H1 (cell line): ENCODE measurements at regions of chr2 and their contacts with region 1.

Region 1: DNA sequence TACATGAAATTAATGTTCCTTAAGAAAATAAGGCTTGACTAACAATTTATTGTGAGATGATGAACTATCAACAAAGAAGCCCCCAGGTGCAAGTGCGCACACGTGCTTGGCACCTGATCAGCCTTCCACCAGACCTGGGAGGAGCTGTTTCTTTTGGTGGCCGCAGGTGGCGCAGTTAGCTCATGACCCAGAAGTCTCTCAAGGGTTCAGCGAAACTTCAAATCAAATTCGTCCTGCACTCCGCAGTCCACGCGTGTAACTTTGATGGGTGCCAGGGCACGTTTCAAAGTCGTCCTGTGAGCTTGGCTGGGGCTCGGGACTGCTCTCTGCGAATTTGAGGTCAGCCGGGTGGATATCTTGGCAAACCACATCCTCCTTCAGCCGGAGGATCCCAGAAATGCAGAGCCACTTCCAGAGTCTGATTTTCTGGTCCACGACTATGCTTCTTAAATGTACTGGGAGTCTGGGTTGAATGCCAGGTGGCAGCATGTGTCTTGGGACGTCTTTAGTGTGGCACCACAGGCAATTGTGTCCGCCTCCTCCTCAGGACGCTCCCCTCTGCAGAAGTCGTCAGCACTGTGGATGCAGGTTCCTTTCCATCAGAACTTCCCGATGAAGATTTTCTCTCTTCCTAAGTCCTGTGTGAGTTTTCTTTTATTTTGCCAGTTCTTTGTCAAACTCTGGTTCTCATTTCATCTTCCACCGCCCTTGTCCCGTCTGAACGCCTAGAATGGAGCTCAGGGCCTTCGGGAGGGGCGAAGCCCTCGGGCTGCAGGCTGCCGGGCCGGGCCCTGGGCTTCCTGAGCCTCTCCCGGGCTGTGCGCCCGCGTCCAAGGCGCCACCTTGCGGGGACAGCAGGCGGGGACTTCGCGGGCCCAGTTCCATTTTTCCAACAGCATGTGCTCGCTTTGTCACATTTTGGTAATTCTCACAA is 61.3 kb upstream of the RAPGEF4 start:
- DNase-seq: peak; percentile 47 to 89
- H3K4me3 ChIP-seq: no peak overlapping the region
- H3K27ac ChIP-seq: no peak overlapping the region
- H3K4me1 ChIP-seq: peaks cover 0 to 4% (median 0%) of the 10 kb centered on the region in 4 experiments; a peak in 1 of 7 replicates
- H3K27me3 ChIP-seq: peaks cover 0 to 4% (median 2%) of the 10 kb centered on the region in 4 experiments; a peak in 2 of 7 replicates
- CTCF ChIP-seq: peak; percentile 78 to 95 (median 81)
- EP300 ChIP-seq: no peak
- POLR2A ChIP-seq: no peak
- RAD21 ChIP-seq: peak; percentile 80 to 85

Region 2: GRCh38 chr2:172606285-172606684 is 68.0 kb before region 1 on chr2:
- CTCF ChIA-PET with region 1: interaction called, 28 read pairs
- POLR2A ChIA-PET with region 1: no interaction called
- DNase-seq: no peak
- H3K4me3 ChIP-seq: no peak overlapping the region
- H3K27ac ChIP-seq: no peak overlapping the region
- H3K4me1 ChIP-seq: no peaks in the 10 kb centered on the region
- H3K27me3 ChIP-seq: no peaks in the 10 kb centered on the region
- CTCF ChIP-seq: no peak
- EP300 ChIP-seq: no peak
- POLR2A ChIP-seq: no peak
- RAD21 ChIP-seq: no peak

Region 3: GRCh38 chr2:172655091-172655837 is 19.0 kb before region 1 on chr2:
- CTCF ChIA-PET with region 1: interaction called, 28 read pairs
- POLR2A ChIA-PET with region 1: no interaction called
- DNase-seq: no peak
- H3K4me3 ChIP-seq: no peak overlapping the region
- H3K27ac ChIP-seq: no peak overlapping the region
- H3K4me1 ChIP-seq: no peaks in the 10 kb centered on the region
- H3K27me3 ChIP-seq: no peaks in the 10 kb centered on the region
- CTCF ChIP-seq: no peak
- EP300 ChIP-seq: no peak
- POLR2A ChIP-seq: no peak
- RAD21 ChIP-seq: no peak

Region 4: GRCh38 chr2:172685467-172685866 is 11.2 kb after region 1 on chr2:
- CTCF ChIA-PET with region 1: interaction called, 41 read pairs
- POLR2A ChIA-PET with region 1: no interaction called
- DNase-seq: no peak
- H3K4me3 ChIP-seq: no peak overlapping the region
- H3K27ac ChIP-seq: no peak overlapping the region
- H3K4me1 ChIP-seq: peaks cover 0 to 3% (median 0%) of the 10 kb centered on the region in 4 experiments; a peak in 1 of 7 replicates
- H3K27me3 ChIP-seq: no peaks in the 10 kb centered on the region
- CTCF ChIP-seq: no peak
- EP300 ChIP-seq: no peak
- POLR2A ChIP-seq: no peak
- RAD21 ChIP-seq: no peak

Region 5: GRCh38 chr2:172698041-172698863 is 24.0 kb after region 1 on chr2:
- CTCF ChIA-PET with region 1: interaction called, 21 read pairs
- POLR2A ChIA-PET with region 1: no interaction called
- DNase-seq: no peak
- H3K4me3 ChIP-seq: no peak overlapping the region
- H3K27ac ChIP-seq: no peak overlapping the region
- H3K4me1 ChIP-seq: no peaks in the 10 kb centered on the region
- H3K27me3 ChIP-seq: no peaks in the 10 kb centered on the region
- CTCF ChIP-seq: no peak
- EP300 ChIP-seq: no peak
- POLR2A ChIP-seq: no peak
- RAD21 ChIP-seq: no peak

Region 6: DNA sequence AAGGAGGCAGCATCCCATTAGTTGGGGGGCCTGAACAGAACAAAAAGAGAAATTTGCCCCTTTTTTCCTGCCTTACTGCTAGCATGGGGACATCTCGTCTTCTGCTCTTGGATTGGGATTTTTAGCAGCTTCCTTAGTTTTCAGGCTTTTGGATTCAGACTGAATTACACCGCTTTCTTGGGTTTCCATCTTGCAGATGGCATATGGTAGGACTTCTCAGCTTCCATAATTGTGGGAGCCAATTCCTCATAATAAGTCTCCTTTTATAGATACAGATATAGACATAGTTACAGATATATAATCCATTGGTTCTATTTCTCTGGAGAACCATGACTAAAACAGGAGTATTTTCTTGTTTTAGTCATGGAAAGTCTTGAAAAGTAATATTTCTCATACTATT is 56.1 kb after region 1 on chr2:
- CTCF ChIA-PET with region 1: no interaction called
- POLR2A ChIA-PET with region 1: no interaction called
- DNase-seq: no peak
- H3K4me3 ChIP-seq: no peak overlapping the region
- H3K27ac ChIP-seq: no peak overlapping the region
- H3K4me1 ChIP-seq: peaks cover 0 to 3% (median 0%) of the 10 kb centered on the region in 4 experiments; a peak in 2 of 7 replicates
- H3K27me3 ChIP-seq: peaks cover 0 to 6% (median 2%) of the 10 kb centered on the region in 4 experiments; a peak in 5 of 7 replicates
- CTCF ChIP-seq: no peak
- EP300 ChIP-seq: no peak
- POLR2A ChIP-seq: no peak
- RAD21 ChIP-seq: no peak

Region 7: GRCh38 chr2:172772633-172773032 is 98.3 kb after region 1 on chr2:
- CTCF ChIA-PET with region 1: no interaction called
- POLR2A ChIA-PET with region 1: no interaction called
- DNase-seq: no peak
- H3K4me3 ChIP-seq: no peak overlapping the region
- H3K27ac ChIP-seq: no peak overlapping the region
- H3K4me1 ChIP-seq: no peaks in the 10 kb centered on the region
- H3K27me3 ChIP-seq: peaks cover 0 to 1% (median 0%) of the 10 kb centered on the region in 4 experiments; a peak in 1 of 7 replicates
- CTCF ChIP-seq: no peak
- EP300 ChIP-seq: no peak
- POLR2A ChIP-seq: no peak
- RAD21 ChIP-seq: no peak